ENCODE measurements at regions of chr14 and their contacts with region 1.

Region 1: GRCh38 chr14:103353366-103353765 is 19.3 kb downstream of the EIF5 start:
- H3K4me3 ChIP-seq: no peak overlapping the region
- H3K27ac ChIP-seq: no peak overlapping the region
- H3K4me1 ChIP-seq: peaks cover 3% of the 10 kb centered on the region; the same call in 1 of the 2 replicates
- CTCF ChIP-seq: no peak

Region 2: DNA sequence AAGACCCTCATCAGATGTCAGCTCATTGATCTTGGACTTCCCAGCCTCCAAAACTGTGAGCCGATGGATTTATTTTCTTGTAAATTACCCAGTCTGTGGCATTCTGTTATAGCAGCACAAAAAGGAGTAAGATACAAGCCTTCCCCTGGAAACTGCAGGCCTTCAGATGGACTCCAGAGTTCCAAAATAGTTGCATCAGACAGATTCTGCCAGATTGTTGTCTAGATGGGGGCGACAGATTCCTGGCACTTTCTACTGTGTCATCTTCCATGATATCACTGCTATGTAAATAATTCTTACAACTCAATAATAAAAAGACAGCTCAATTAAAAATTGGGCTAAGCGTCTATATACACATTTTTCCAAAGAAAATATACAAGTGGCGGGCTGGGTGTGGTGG is 14.6 kb after region 1 on chr14:
- CTCF ChIA-PET with region 1: interaction called, 12 read pairs
- POLR2A ChIA-PET with region 1: no interaction called
- H3K4me3 ChIP-seq: no peak overlapping the region
- H3K27ac ChIP-seq: no peak overlapping the region
- H3K4me1 ChIP-seq: no peaks in the 10 kb centered on the region
- CTCF ChIP-seq: no peak

Measured in HEK293 (cell line).